Naive thymus-derived CD4-positive, alpha-beta T cell (primary cell): ENCODE measurements at regions of chr21 and their contacts with region 1.

Region 1: GRCh38 chr21:35051287-35051818 is 2.3 kb upstream of the RUNX1 start:
- DNase-seq: peak; percentile 61 to 85 (median 80)
- ATAC-seq: peak; percentile 74
- H3K4me3 ChIP-seq: no peak overlapping the region
- H3K4me3 Mint-ChIP-seq: peak overlapping the region; percentile 70 to 99 (median 94)
- H3K27ac ChIP-seq: peak overlapping the region; percentile 38
- H3K27ac Mint-ChIP-seq: peak overlapping the region; percentile 80 to 100 (median 98)
- H3K4me1 ChIP-seq: peaks cover 29 to 42% of the 10 kb centered on the region in 2 donors
- H3K4me1 Mint-ChIP-seq: peaks cover 37 to 61% (median 47%) of the 10 kb centered on the region in 7 donors
- H3K27me3 ChIP-seq: no peaks in the 10 kb centered on the region
- H3K27me3 Mint-ChIP-seq: peaks cover 0 to 5% (median 0%) of the 10 kb centered on the region in 5 donors

Region 2: GRCh38 chr21:34614633-34615486 is 436.5 kb before region 1 on chr21 and contains the start of gene RCAN1:
- CTCF ChIA-PET with region 1: no interaction called
- POLR2A ChIA-PET with region 1: no interaction called
- intact Hi-C with region 1: loop called in 1 of 2 experiments (anchors 5 kb)
- DNase-seq: peak; percentile 70 to 87 (median 85)
- ATAC-seq: peak; percentile 99
- H3K4me3 ChIP-seq: peak within 1 kb of the TSS; percentile 67
- H3K4me3 Mint-ChIP-seq: peak within 1 kb of the TSS; percentile 83 to 96 (median 93)
- H3K27ac ChIP-seq: peak within 1 kb of the TSS; percentile 57
- H3K27ac Mint-ChIP-seq: peak within 1 kb of the TSS; percentile 82 to 95 (median 83)
- H3K4me1 ChIP-seq: peaks cover 4 to 12% of the 10 kb centered on the region in 2 donors
- H3K4me1 Mint-ChIP-seq: peaks cover 15 to 25% (median 20%) of the 10 kb centered on the region in 7 donors
- H3K27me3 ChIP-seq: no peaks in the 10 kb centered on the region
- H3K27me3 Mint-ChIP-seq: peaks cover 0 to 32% (median 0%) of the 10 kb centered on the region in 5 donors
- total RNA-seq, gene RCAN1: 3.0 to 8.1 (median 4.9) TPM

Region 3: GRCh38 chr21:34967509-34968289 is 83.7 kb before region 1 on chr21:
- CTCF ChIA-PET with region 1: no interaction called
- POLR2A ChIA-PET with region 1: interaction called, 9 read pairs
- intact Hi-C with region 1: loop called in 1 of 2 experiments (anchors 1 kb)
- DNase-seq: peak in 1 of 9 donors; percentile 30
- ATAC-seq: peak; percentile 60
- H3K4me3 ChIP-seq: no peak overlapping the region
- H3K4me3 Mint-ChIP-seq: peak overlapping the region in 9 of 10 donors; percentile 18 to 82 (median 69)
- H3K27ac ChIP-seq: no peak overlapping the region
- H3K27ac Mint-ChIP-seq: peak overlapping the region; percentile 65 to 93 (median 85)
- H3K4me1 ChIP-seq: peaks cover 31 to 75% of the 10 kb centered on the region in 2 donors
- H3K4me1 Mint-ChIP-seq: peaks cover 78 to 100% (median 96%) of the 10 kb centered on the region in 7 donors
- H3K27me3 ChIP-seq: no peaks in the 10 kb centered on the region
- H3K27me3 Mint-ChIP-seq: peaks cover 0 to 8% (median 0%) of the 10 kb centered on the region in 5 donors

Region 4: GRCh38 chr21:35020902-35021301 is 30.5 kb before region 1 on chr21:
- CTCF ChIA-PET with region 1: interaction called, 7 read pairs
- POLR2A ChIA-PET with region 1: interaction called, 110 read pairs
- intact Hi-C with region 1: loop called in 1 of 2 experiments (anchors 1 kb)
- DNase-seq: no peak
- ATAC-seq: no peak
- H3K4me3 ChIP-seq: no peak overlapping the region
- H3K4me3 Mint-ChIP-seq: peak overlapping the region in 5 of 10 donors; percentile 16 to 81 (median 45)
- H3K27ac ChIP-seq: peak overlapping the region; percentile 6
- H3K27ac Mint-ChIP-seq: peak overlapping the region in 7 of 9 donors; percentile 55 to 89 (median 78)
- H3K4me1 ChIP-seq: peaks cover 67 to 72% of the 10 kb centered on the region in 2 donors
- H3K4me1 Mint-ChIP-seq: peaks cover 76 to 97% (median 94%) of the 10 kb centered on the region in 7 donors
- H3K27me3 ChIP-seq: no peaks in the 10 kb centered on the region
- H3K27me3 Mint-ChIP-seq: no peaks in the 10 kb centered on the region

Region 5: GRCh38 chr21:35138665-35139381 is 87.5 kb after region 1 on chr21:
- CTCF ChIA-PET with region 1: interaction called, 3 read pairs
- POLR2A ChIA-PET with region 1: no interaction called
- intact Hi-C with region 1: loop called in 1 of 2 experiments (anchors 5 kb)
- DNase-seq: peak in 8 of 9 donors; percentile 6 to 43 (median 34)
- ATAC-seq: peak; percentile 57
- H3K4me3 ChIP-seq: no peak overlapping the region
- H3K4me3 Mint-ChIP-seq: peak overlapping the region; percentile 35 to 81 (median 66)
- H3K27ac ChIP-seq: no peak overlapping the region
- H3K27ac Mint-ChIP-seq: peak overlapping the region in 8 of 9 donors; percentile 4 to 65 (median 44)
- H3K4me1 ChIP-seq: peaks cover 6 to 11% of the 10 kb centered on the region in 2 donors
- H3K4me1 Mint-ChIP-seq: peaks cover 0 to 22% (median 15%) of the 10 kb centered on the region in 7 donors
- H3K27me3 ChIP-seq: no peaks in the 10 kb centered on the region
- H3K27me3 Mint-ChIP-seq: no peaks in the 10 kb centered on the region

Region 6: GRCh38 chr21:35400233-35400957 is 349.0 kb after region 1 on chr21:
- CTCF ChIA-PET with region 1: interaction called, 6 read pairs
- POLR2A ChIA-PET with region 1: interaction called, 3 read pairs
- intact Hi-C with region 1: loop called (anchors 1 kb)
- DNase-seq: peak in 8 of 9 donors; percentile 23 to 73 (median 63)
- ATAC-seq: peak; percentile 88
- H3K4me3 ChIP-seq: no peak overlapping the region
- H3K4me3 Mint-ChIP-seq: peak overlapping the region in 3 of 10 donors; percentile 0 to 9 (median 1)
- H3K27ac ChIP-seq: no peak overlapping the region
- H3K27ac Mint-ChIP-seq: peak overlapping the region in 1 of 9 donors; percentile 65
- H3K4me1 ChIP-seq: no peaks in the 10 kb centered on the region
- H3K4me1 Mint-ChIP-seq: peaks cover 7 to 21% (median 15%) of the 10 kb centered on the region in 7 donors
- H3K27me3 ChIP-seq: no peaks in the 10 kb centered on the region
- H3K27me3 Mint-ChIP-seq: peaks cover 0 to 4% (median 0%) of the 10 kb centered on the region in 5 donors

Region 7: DNA sequence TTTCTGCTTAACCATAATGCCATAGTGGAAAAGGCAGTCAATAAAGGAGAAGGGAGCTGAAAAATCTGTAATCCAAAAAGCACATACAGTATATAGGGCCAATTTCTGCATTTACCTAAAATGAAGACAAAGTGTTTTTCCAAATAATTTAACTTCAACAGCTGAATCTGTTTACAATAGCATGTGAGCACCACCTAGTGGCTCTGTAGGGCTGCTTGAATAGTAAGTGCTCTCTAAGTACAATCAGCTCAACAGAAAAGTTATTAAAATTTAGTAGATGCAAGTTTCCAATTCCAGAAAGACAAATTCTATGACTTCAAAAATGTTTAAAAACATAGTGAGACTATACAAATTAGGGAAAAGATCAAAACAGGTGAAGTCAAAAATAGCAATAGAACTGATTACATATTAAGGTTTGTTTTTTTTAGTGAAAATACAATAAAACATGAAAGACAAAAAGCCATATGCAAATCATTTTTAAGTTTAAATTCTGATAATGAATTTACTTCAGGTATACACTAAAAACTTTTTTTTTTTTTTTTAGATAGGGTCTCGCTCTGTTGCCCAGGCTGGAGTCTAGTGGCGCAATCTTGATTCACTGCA is 788.9 kb after region 1 on chr21:
- CTCF ChIA-PET with region 1: no interaction called
- POLR2A ChIA-PET with region 1: no interaction called
- intact Hi-C with region 1: loop called (anchors 1 kb)
- DNase-seq: peak in 7 of 9 donors; percentile 30 to 69 (median 52)
- ATAC-seq: peak; percentile 69
- H3K4me3 ChIP-seq: no peak overlapping the region
- H3K4me3 Mint-ChIP-seq: no peak overlapping the region
- H3K27ac ChIP-seq: no peak overlapping the region
- H3K27ac Mint-ChIP-seq: no peak overlapping the region
- H3K4me1 ChIP-seq: peaks cover 0 to 4% of the 10 kb centered on the region in 2 donors
- H3K4me1 Mint-ChIP-seq: peaks cover 0 to 18% (median 5%) of the 10 kb centered on the region in 7 donors
- H3K27me3 ChIP-seq: no peaks in the 10 kb centered on the region
- H3K27me3 Mint-ChIP-seq: peaks cover 0 to 6% (median 0%) of the 10 kb centered on the region in 5 donors